ENCODE measurements at regions of chr11 and their contacts with region 1.

Region 1: GRCh38 chr11:85595285-85595884 is 31.8 kb downstream of the DLG2 start:
- DNase-seq: peak; percentile 63
- ATAC-seq: peak; percentile 79
- H3K4me3 ChIP-seq: no peak overlapping the region
- H3K27ac ChIP-seq: no peak overlapping the region
- H3K4me1 ChIP-seq: no peaks in the 10 kb centered on the region
- H3K27me3 ChIP-seq: no peaks in the 10 kb centered on the region; the same call in 1 of the 2 replicates
- CTCF ChIP-seq: peak; percentile 70
- POLR2A ChIP-seq: no peak
- RAD21 ChIP-seq: peak; percentile 92

Region 2: GRCh38 chr11:83836883-83837654 is 1758.3 kb before region 1 on chr11:
- CTCF ChIA-PET with region 1: no interaction called
- POLR2A ChIA-PET with region 1: no interaction called
- dilution Hi-C with region 1: no loop called
- in situ Hi-C with region 1: loop called (anchors 25 kb)
- intact Hi-C with region 1: no loop called
- DNase-seq: peak; percentile 50
- ATAC-seq: peak; percentile 91
- H3K4me3 ChIP-seq: no peak overlapping the region
- H3K27ac ChIP-seq: no peak overlapping the region
- H3K4me1 ChIP-seq: peaks cover 2% of the 10 kb centered on the region; the same call in 1 of the 2 replicates
- H3K27me3 ChIP-seq: peaks cover 4% of the 10 kb centered on the region; the same call in 1 of the 2 replicates
- CTCF ChIP-seq: peak; percentile 77
- POLR2A ChIP-seq: no peak
- RAD21 ChIP-seq: peak; percentile 84

Region 3: DNA sequence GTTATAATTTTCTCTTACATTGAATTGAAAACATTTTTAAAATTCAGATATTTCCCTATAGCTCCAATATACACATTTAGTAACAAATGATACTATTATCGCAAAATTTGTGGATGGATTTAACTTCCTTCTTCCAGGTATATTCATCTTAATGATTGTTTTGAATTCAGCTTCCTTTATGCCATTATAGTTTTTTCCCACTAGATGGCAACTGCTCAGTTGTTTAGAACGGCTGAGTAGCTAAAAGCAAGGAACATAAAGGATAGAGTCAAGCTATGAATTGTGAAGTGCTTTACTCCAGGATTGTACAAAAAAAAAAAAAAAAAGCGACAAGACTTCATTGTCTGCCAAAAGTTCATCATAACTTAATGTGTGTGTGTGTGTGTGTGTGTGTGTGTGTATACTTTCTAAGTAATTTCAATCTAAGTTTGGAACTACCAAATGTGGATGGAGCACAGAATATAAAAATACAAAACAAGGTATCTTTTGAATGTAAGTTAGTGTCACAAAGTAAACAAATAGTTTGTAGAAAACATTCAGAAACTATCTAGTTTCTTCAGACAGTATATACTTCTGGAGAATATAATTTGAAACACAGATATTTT is 814.6 kb before region 1 on chr11:
- CTCF ChIA-PET with region 1: interaction called, 4 read pairs
- POLR2A ChIA-PET with region 1: no interaction called
- dilution Hi-C with region 1: no loop called
- in situ Hi-C with region 1: no loop called
- intact Hi-C with region 1: loop called (anchors 5 kb)
- DNase-seq: peak; percentile 15
- ATAC-seq: no peak
- H3K4me3 ChIP-seq: no peak overlapping the region
- H3K27ac ChIP-seq: no peak overlapping the region
- H3K4me1 ChIP-seq: no peaks in the 10 kb centered on the region
- H3K27me3 ChIP-seq: no peaks in the 10 kb centered on the region
- CTCF ChIP-seq: peak; percentile 50
- POLR2A ChIP-seq: no peak
- RAD21 ChIP-seq: peak; percentile 53

Region 4: GRCh38 chr11:85627998-85628770 is 32.8 kb after region 1 on chr11 and contains the start of gene TMEM126B:
- CTCF ChIA-PET with region 1: interaction called, 3 read pairs
- POLR2A ChIA-PET with region 1: no interaction called
- dilution Hi-C with region 1: no loop called
- in situ Hi-C with region 1: no loop called
- intact Hi-C with region 1: loop called (anchors 1 kb)
- DNase-seq: peak; percentile 94
- ATAC-seq: peak; percentile 99
- H3K4me3 ChIP-seq: peak within 1 kb of the TSS; percentile 74
- H3K27ac ChIP-seq: peak within 1 kb of the TSS; percentile 86
- H3K4me1 ChIP-seq: peaks cover 2% of the 10 kb centered on the region
- H3K27me3 ChIP-seq: no peaks in the 10 kb centered on the region
- CTCF ChIP-seq: no peak
- POLR2A ChIP-seq: peak; percentile 54; the same call in 1 of the 2 replicates
- RAD21 ChIP-seq: no peak
- total RNA-seq, gene TMEM126B: 56.8 and 79.4 TPM in 2 replicates

Region 5: DNA sequence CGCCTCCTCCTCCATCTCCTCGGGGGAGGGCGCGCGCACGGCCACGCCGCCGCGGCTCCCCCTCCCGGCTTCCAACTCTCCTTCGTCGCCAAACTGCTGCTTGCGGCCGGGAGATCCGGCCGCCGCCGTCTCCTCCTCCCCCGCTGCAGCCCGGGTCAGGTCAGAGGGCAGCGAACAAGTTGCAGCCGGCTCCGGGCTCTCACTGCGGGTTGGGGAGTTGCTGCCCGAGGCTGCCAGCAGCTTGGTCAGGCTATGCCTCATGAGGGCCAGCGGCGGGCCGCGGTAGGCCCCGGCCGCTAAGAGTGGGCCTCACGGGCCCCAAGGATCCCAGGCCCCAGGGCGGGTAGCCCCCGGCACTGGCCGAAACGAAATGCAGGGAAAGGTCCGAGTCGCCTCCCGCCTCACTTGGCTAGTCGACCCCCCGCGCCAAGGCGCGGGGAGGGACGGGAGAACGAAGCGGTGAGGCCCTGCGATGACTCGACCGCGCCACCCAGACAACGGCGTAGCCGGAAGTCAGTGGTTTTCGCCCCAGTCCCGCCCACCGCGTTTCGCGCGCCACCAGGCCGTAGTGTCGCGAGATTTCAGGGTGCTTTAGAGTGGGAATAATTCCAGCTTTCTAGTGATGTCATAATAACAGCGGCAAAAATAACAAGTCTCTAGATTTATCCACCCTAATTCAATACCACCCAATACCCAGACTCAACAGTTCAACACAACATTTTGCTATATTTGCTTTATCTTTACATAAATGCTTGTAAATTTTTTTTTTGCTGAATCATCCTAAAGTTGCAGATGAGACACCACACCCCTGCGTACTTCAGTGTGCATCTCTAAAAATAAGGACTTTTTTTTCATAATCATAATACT is 69.5 kb after region 1 on chr11 and contains the start of gene CREBZF:
- CTCF ChIA-PET with region 1: no interaction called
- POLR2A ChIA-PET with region 1: no interaction called
- dilution Hi-C with region 1: no loop called
- in situ Hi-C with region 1: no loop called
- intact Hi-C with region 1: loop called (anchors 1 kb)
- DNase-seq: peak; percentile 95
- ATAC-seq: peak; percentile 92
- H3K4me3 ChIP-seq: peak within 1 kb of the TSS; percentile 96
- H3K27ac ChIP-seq: peak within 1 kb of the TSS; percentile 85
- H3K4me1 ChIP-seq: no peaks in the 10 kb centered on the region; the same call in 1 of the 2 replicates
- H3K27me3 ChIP-seq: no peaks in the 10 kb centered on the region
- CTCF ChIP-seq: no peak
- POLR2A ChIP-seq: peak; percentile 94
- RAD21 ChIP-seq: no peak
- total RNA-seq, gene CREBZF: 12.5 and 24.4 TPM in 2 replicates

Region 6: DNA sequence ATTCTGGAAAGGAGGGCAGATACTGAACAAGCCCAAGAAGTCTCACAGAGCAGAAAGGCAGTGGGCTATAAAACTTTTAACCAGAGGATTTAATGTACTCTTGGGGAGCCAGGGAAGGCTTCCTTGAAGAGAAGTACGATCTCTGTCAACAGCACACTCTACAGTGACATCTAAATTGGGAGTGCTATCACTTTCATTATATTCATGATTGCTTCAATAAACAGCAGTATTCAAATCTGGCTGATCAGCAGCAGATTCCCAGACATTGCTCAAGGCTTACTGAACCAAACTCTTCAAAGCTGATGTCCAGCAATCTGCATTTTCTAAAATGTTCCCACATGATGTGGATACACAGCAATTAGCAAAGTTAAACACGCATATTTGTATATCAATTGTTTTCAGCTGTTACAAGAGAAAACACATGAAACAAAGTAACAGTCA is 171.4 kb after region 1 on chr11:
- CTCF ChIA-PET with region 1: no interaction called
- POLR2A ChIA-PET with region 1: no interaction called
- dilution Hi-C with region 1: no loop called
- in situ Hi-C with region 1: no loop called
- intact Hi-C with region 1: no loop called
- DNase-seq: peak; percentile 44
- ATAC-seq: peak; percentile 61
- H3K4me3 ChIP-seq: no peak overlapping the region
- H3K27ac ChIP-seq: peak overlapping the region; percentile 41; the same call in 1 of the 2 replicates
- H3K4me1 ChIP-seq: peaks cover 10% of the 10 kb centered on the region
- H3K27me3 ChIP-seq: no peaks in the 10 kb centered on the region
- CTCF ChIP-seq: no peak
- POLR2A ChIP-seq: no peak
- RAD21 ChIP-seq: no peak

Region 7: GRCh38 chr11:85854557-85855340 is 259.4 kb after region 1 on chr11:
- CTCF ChIA-PET with region 1: no interaction called
- POLR2A ChIA-PET with region 1: no interaction called
- dilution Hi-C with region 1: no loop called
- in situ Hi-C with region 1: no loop called
- intact Hi-C with region 1: loop called (anchors 1 kb)
- DNase-seq: peak; percentile 90
- ATAC-seq: peak; percentile 99
- H3K4me3 ChIP-seq: peak overlapping the region; percentile 90
- H3K27ac ChIP-seq: peak overlapping the region; percentile 98
- H3K4me1 ChIP-seq: peaks cover 7% of the 10 kb centered on the region
- H3K27me3 ChIP-seq: no peaks in the 10 kb centered on the region
- CTCF ChIP-seq: peak; percentile 82
- POLR2A ChIP-seq: peak; percentile 69
- RAD21 ChIP-seq: peak; percentile 93

Region 8: GRCh38 chr11:85875142-85875922 is 279.9 kb after region 1 on chr11:
- CTCF ChIA-PET with region 1: no interaction called
- POLR2A ChIA-PET with region 1: no interaction called
- dilution Hi-C with region 1: no loop called
- in situ Hi-C with region 1: no loop called
- intact Hi-C with region 1: no loop called
- DNase-seq: peak; percentile 83
- ATAC-seq: peak; percentile 79
- H3K4me3 ChIP-seq: no peak overlapping the region
- H3K27ac ChIP-seq: peak overlapping the region; percentile 55; the same call in 1 of the 2 replicates
- H3K4me1 ChIP-seq: peaks cover 9% of the 10 kb centered on the region
- H3K27me3 ChIP-seq: no peaks in the 10 kb centered on the region
- CTCF ChIP-seq: no peak
- POLR2A ChIP-seq: no peak
- RAD21 ChIP-seq: no peak

Region 9: GRCh38 chr11:85977751-85978160 is 382.4 kb after region 1 on chr11:
- CTCF ChIA-PET with region 1: no interaction called
- POLR2A ChIA-PET with region 1: no interaction called
- dilution Hi-C with region 1: no loop called
- in situ Hi-C with region 1: no loop called
- intact Hi-C with region 1: no loop called
- DNase-seq: no peak
- ATAC-seq: no peak
- H3K4me3 ChIP-seq: no peak overlapping the region
- H3K27ac ChIP-seq: no peak overlapping the region
- H3K4me1 ChIP-seq: peaks cover 2% of the 10 kb centered on the region
- H3K27me3 ChIP-seq: no peaks in the 10 kb centered on the region
- CTCF ChIP-seq: no peak
- POLR2A ChIP-seq: no peak
- RAD21 ChIP-seq: no peak

Region 10: GRCh38 chr11:86151174-86152005 is 556.0 kb after region 1 on chr11:
- CTCF ChIA-PET with region 1: no interaction called
- POLR2A ChIA-PET with region 1: no interaction called
- dilution Hi-C with region 1: no loop called
- in situ Hi-C with region 1: no loop called
- intact Hi-C with region 1: no loop called
- DNase-seq: peak; percentile 23
- ATAC-seq: peak; percentile 57
- H3K4me3 ChIP-seq: no peak overlapping the region
- H3K27ac ChIP-seq: peak overlapping the region; percentile 36
- H3K4me1 ChIP-seq: peaks cover 18% of the 10 kb centered on the region
- H3K27me3 ChIP-seq: no peaks in the 10 kb centered on the region
- CTCF ChIP-seq: no peak
- POLR2A ChIP-seq: no peak
- RAD21 ChIP-seq: no peak

Region 11: DNA sequence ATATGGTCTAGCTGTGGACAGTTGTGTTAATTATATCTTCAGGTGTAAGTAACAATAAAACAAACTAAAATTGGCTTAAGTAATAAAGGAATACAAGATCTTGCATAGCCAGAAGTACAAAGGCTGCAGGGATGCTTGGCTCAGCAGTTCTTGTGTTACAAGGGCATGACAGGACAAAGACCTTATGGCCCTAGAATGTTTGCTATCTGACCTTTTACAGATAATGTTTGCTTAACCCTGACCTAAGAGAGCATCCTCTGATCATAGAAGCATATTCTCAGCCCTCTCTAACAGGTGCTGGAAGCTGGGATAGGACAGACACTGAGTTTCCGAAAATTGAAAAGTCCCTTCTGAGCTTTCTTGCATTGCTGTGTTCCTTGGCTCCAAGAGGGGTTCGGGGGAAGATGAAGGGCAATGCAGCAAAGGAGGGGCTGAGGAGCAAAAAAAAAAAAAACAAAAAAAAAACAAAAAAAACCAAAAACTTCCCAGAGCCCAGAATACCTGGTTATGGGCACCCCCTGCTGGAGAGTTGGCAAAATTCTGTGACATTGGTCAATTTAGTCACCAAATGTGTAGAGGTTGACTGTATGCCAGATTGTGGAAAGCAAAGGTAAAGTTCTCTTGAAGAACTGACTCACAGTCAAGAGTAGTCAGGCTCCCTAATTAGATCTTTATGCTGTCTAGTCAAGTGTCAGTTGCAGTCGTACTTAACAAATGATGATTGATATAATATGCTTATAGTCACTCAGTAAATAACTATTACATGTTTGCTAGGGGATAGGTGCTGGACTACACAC is 696.3 kb after region 1 on chr11:
- CTCF ChIA-PET with region 1: no interaction called
- POLR2A ChIA-PET with region 1: no interaction called
- dilution Hi-C with region 1: no loop called
- in situ Hi-C with region 1: no loop called
- intact Hi-C with region 1: loop called (anchors 5 kb)
- DNase-seq: peak; percentile 55
- ATAC-seq: peak; percentile 71; the same call in 1 of the 2 replicates
- H3K4me3 ChIP-seq: no peak overlapping the region
- H3K27ac ChIP-seq: no peak overlapping the region
- H3K4me1 ChIP-seq: peaks cover 2% of the 10 kb centered on the region; the same call in 1 of the 2 replicates
- H3K27me3 ChIP-seq: peaks cover 2% of the 10 kb centered on the region; the same call in 1 of the 2 replicates
- CTCF ChIP-seq: peak; percentile 69
- POLR2A ChIP-seq: no peak
- RAD21 ChIP-seq: peak; percentile 81

Measured in IMR-90 (cell line).